ENCODE measurements at regions of chr14 and their contacts with region 1.

Region 1: DNA sequence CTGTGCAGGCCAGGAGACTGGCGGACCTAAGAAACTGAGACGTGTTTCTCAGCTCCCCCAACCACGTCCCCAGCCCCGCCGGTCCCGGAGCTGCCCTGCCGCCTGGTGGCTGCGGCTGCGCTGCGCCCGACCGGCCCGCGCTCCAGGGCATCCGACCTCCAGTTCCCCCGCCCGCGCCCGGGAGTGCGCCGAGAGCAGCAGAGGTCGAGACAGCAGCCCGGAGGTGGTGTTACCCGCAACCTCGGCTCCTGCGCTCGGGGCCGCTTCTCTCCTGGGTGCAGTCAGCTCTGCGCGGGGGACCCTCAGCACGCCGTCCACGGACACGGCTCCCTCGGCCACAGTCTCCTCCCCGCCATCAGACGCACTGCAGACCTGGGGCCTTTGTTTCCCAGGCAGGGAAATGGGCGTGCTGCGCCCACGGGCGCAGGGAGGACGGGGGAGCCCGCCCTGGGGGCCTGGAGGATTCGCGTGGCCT is 21.6 kb upstream of the GPR132 start:
- DNase-seq: peak; percentile 92
- H3K4me3 Mint-ChIP-seq: peak overlapping the region; percentile 79
- H3K27ac Mint-ChIP-seq: no peak overlapping the region
- H3K4me1 Mint-ChIP-seq: peaks cover 11% of the 10 kb centered on the region
- H3K27me3 Mint-ChIP-seq: peaks cover 28% of the 10 kb centered on the region
- CTCF ChIP-seq: peak; percentile 79

Region 2: DNA sequence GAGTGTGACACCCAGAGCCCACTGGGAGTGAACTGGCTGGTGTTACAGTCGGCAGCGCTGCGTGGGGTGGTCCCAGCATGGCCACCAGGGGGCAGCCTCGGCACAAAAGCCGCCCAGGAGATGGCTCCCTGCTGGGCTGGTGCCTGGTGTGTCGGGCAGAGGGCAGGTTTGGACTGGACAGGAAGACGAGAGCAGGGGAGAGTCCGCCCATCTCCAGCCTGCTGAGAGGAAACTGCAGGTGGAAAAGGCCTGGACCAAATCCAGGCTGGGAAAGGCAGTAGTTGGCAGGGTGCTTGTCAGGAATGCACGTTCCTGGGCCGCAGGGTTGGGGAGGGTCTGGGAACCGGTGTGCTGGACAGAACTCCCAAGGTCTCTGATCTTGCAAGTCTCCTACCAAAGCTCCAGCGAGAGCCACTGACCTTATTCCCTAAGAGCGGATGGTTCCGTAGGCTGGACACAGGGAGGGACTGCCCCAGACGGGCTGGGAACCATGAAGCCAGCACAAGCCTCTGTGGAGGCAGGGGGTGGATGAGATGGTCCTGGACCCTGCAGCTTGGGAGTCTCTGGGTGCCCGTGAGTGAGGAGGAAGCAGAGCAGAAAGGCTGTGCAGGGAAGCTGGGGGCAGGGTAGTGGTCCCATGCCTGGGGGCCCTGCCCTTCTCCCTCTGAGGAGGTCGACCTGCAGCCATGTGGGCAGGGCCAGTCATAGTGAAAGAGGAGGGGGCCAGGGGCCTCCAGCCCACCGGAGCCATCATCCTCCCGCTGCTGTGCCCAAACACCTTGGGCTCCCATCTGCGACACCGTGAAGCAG is 110.5 kb before region 1 on chr14:
- CTCF ChIA-PET with region 1: interaction called, 10 read pairs
- intact Hi-C with region 1: loop called (anchors 2 kb)
- DNase-seq: peak; percentile 93
- H3K4me3 Mint-ChIP-seq: peak overlapping the region; percentile 92
- H3K27ac Mint-ChIP-seq: peak overlapping the region; percentile 54
- H3K4me1 Mint-ChIP-seq: peaks cover 52% of the 10 kb centered on the region
- H3K27me3 Mint-ChIP-seq: no peaks in the 10 kb centered on the region
- CTCF ChIP-seq: peak; percentile 91

Region 3: DNA sequence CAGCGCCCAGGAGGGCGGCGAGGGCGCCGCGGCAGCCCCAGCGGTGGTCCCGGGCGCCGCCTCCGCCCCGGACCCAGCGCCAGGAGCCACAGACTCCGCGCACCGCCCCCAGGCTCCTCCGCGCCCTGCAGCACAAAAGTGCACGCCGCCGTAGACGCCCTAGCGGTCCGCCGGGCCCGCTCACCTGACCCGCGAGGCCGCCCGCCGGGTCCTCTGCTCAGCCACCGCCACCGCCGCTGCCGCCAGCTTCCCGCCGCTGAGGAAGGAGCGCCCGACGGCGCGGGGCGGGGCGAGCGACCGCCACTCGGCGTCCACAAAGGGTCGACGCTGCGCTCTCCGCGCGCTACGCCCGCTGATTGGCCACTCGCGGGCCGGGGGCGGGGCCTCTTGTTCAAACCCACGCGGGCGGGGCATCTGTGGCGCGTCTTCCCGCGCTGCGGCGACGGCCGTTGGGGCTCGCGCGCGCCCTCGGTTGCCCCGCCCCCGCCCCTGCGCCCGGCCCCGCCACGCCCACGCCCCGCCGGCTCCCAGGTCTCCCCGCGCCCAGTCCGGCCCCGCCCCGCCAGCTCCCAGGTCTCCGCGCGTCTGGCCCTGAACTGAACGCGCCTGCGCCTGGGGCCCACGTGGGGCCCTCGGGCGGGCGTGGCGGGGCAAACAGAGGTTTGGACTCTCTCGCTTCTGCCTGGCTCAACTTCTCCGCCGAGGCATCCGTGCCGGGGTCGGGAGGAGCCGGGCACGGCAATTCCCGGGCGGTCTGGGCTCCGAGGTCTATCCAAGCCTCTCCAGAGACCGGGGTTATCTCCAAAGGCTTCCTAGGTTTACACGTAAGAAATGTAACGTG is 65.8 kb before region 1 on chr14 and contains the start of gene CDCA4:
- CTCF ChIA-PET with region 1: interaction called, 8 read pairs
- intact Hi-C with region 1: loop called (anchors 10 kb)
- DNase-seq: peak; percentile 98
- H3K4me3 Mint-ChIP-seq: peak within 1 kb of the TSS; percentile 96
- H3K27ac Mint-ChIP-seq: peak within 1 kb of the TSS; percentile 97
- H3K4me1 Mint-ChIP-seq: peaks cover 38% of the 10 kb centered on the region
- H3K27me3 Mint-ChIP-seq: no peaks in the 10 kb centered on the region
- CTCF ChIP-seq: no peak
- total RNA-seq, gene CDCA4: 28.9 and 32.4 TPM in 2 replicates

Region 4: DNA sequence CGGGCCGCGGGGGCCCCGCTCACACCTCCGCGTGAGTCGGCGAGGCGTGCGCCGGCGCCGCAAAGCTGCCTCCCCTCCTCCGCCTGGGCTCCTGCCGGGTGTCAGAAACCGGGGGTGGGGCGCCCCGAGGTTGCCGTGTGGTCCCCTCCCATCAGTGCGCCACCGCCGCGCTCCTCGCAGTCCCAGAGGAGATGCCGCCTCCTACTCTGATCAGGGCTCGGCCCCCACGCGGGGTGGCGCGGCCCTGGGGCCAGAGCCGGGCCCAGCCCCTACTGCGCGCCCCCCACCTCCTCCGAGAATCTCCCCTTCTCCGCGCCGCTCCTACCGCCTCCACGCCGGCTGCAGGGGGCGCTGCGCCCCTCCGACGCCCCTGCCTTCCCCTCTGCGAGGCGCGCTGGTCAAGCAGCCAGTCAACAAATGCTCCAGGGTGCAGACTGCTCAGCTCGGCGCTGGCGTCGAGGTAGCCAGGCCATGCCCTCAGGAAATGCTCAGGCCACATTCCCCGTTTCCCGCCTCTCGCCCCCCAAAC is 82.2 kb after region 1 on chr14:
- CTCF ChIA-PET with region 1: interaction called, 5 read pairs
- intact Hi-C with region 1: loop called (anchors 5 kb)
- DNase-seq: no peak
- H3K4me3 Mint-ChIP-seq: peak overlapping the region; percentile 51
- H3K27ac Mint-ChIP-seq: peak overlapping the region; percentile 68
- H3K4me1 Mint-ChIP-seq: peaks cover 10% of the 10 kb centered on the region
- H3K27me3 Mint-ChIP-seq: peaks cover 11% of the 10 kb centered on the region
- CTCF ChIP-seq: no peak

Region 5: DNA sequence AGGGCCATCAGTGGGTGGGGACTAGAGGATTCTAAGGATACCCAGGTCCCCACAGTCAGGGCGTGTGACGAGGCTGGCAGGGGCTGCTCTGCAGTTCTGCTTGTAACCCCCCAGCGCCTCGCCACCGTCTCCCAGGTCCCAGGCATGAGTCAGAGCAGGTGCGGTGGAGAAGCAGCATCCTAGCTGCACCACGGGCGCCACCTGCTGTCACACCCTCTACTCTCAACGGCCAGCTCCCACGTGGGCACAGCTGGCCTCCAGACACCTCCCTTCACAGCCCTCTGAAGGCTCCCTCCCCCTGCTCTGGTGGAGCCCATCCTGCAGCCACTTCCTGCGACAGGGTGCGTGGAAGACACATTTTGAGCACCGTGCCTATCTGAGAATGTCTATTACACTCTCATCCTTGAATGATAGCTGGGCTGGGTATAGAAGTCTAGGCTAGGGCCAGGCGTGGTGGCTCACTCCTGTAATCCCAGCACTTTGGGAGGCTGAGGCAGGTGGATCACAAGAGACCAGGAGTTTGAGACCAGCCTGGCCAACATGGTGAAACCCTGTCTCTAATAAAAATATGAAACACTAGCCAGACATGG is 101.2 kb after region 1 on chr14:
- CTCF ChIA-PET with region 1: interaction called, 10 read pairs
- intact Hi-C with region 1: loop called (anchors 5 kb)
- DNase-seq: peak; percentile 68
- H3K4me3 Mint-ChIP-seq: no peak overlapping the region
- H3K27ac Mint-ChIP-seq: no peak overlapping the region
- H3K4me1 Mint-ChIP-seq: no peaks in the 10 kb centered on the region
- H3K27me3 Mint-ChIP-seq: peaks cover 55% of the 10 kb centered on the region
- CTCF ChIP-seq: peak; percentile 35

Region 6: DNA sequence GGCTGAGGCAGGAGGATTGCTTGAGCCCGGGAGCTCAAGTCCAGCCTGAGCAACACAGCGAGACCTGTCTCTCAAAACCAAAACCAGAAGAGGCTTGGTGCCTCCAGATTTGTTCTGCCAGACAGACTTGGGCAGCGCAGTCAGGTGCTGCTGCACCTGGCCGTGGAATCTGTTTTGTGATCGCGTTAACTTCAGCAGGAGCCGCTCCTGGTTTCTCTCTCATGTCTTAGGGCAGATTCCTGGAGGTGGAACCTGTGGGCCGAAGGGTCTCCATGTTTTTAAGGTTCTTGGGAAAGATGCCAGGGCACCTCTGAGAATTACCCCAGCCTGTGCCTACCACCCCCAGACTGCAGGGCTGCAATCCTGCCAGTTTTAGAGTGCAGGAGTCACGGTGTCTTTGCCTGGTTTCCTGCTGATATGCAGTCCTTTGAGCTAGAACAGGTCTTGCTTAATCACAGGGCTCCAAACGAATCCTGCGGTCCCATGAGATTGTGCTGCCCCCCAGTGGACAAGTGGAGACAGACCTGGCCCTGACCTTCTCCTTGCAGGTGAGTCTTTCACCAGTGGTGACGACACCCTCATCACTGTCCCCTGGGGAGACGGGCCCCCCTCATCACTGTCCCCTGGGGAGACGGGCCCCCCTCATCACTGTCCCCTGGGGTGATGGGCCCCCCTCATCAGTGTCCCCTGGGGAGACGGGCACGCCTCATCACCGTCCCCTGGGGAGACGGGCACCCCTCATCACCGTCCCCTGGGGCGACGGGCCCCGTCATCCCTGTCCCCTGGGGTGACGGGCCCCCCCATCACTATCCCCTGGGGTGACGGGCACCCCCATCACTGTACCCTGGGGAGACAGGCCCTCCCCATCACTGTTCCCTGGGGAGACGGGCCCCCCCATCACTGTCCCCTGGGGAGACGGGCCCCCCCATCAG is 265.3 kb after region 1 on chr14:
- CTCF ChIA-PET with region 1: interaction called, 7 read pairs
- intact Hi-C with region 1: loop called (anchors 10 kb)
- DNase-seq: peak; percentile 90
- H3K4me3 Mint-ChIP-seq: no peak overlapping the region
- H3K27ac Mint-ChIP-seq: no peak overlapping the region
- H3K4me1 Mint-ChIP-seq: no peaks in the 10 kb centered on the region
- H3K27me3 Mint-ChIP-seq: no peaks in the 10 kb centered on the region
- CTCF ChIP-seq: peak; percentile 83